AG04450 (cell line): ENCODE measurements at regions of chr5 and their contacts with region 1.

Region 1: GRCh38 chr5:82425591-82425990 is 147.4 kb upstream of the RPS23 start:
- DNase-seq: no peak
- H3K4me3 ChIP-seq: no peak overlapping the region
- H3K27ac ChIP-seq: no peak overlapping the region
- H3K27me3 ChIP-seq: peaks cover 3% of the 10 kb centered on the region
- CTCF ChIP-seq: no peak

Region 2: DNA sequence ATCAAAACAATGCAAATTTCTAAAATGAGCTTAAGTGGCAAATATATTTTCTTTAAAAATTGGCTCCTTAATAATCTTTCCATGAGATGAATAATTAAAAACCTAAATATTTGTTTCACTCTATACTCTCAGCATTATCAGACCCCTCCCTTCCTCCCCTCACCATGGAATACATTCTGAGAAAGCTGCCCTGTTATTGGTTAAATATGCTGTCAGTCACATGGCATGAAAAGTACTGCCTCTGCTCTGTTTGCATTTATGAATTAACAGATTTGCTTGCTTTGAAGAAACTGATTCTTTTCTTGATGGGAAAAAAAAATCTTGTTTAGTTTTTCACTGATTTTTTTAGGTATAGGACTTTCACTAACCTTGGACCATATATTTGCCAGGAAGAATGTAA is 130.4 kb before region 1 on chr5:
- CTCF ChIA-PET with region 1: no interaction called
- POLR2A ChIA-PET with region 1: interaction called, 10 read pairs
- DNase-seq: no peak
- H3K4me3 ChIP-seq: no peak overlapping the region
- H3K27ac ChIP-seq: no peak overlapping the region
- H3K27me3 ChIP-seq: no peaks in the 10 kb centered on the region
- CTCF ChIP-seq: no peak

Region 3: GRCh38 chr5:82413302-82414040 is 12.1 kb before region 1 on chr5:
- CTCF ChIA-PET with region 1: interaction called, 10 read pairs
- POLR2A ChIA-PET with region 1: no interaction called
- DNase-seq: peak; percentile 55
- H3K4me3 ChIP-seq: no peak overlapping the region
- H3K27ac ChIP-seq: peak overlapping the region; percentile 85
- H3K27me3 ChIP-seq: no peaks in the 10 kb centered on the region
- CTCF ChIP-seq: no peak